T-cell (primary cell): ENCODE measurements at regions of chr12 and their contacts with region 1.

Region 1: DNA sequence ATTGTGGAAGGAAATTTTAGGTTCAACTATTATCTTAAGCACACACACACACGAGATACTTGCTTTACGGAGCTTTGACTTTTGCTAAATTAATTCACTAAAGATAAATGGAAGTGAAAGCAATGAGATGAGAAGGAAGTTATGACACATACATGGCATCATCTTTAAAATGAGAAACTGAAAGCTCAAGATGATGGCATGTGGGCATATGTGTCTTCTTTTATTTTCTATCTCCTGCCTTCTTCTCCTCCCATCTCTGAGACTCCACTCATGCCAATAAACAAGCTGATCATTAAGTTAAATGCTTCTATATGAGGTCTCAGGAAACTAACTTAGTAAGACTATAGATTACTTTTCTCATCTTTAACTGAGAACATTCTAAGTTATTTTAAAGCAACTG is 216.7 kb downstream of the MED13L start:
- DNase-seq: peak in 1 of 35 experiments; percentile 51
- ATAC-seq: peak; percentile 51 to 91 (median 70)
- H3K4me3 ChIP-seq: no peak overlapping the region
- H3K4me3 Mint-ChIP-seq: peak overlapping the region; percentile 52 to 62 (median 59)
- H3K27ac ChIP-seq: no peak overlapping the region
- H3K27ac Mint-ChIP-seq: peak overlapping the region; percentile 4 to 72
- H3K4me1 ChIP-seq: peaks cover 5 to 14% of the 10 kb centered on the region in 2 experiments
- H3K4me1 Mint-ChIP-seq: peaks cover 56 to 68% (median 59%) of the 10 kb centered on the region in 3 donors
- H3K27me3 ChIP-seq: no peaks in the 10 kb centered on the region
- H3K27me3 Mint-ChIP-seq: no peaks in the 10 kb centered on the region

Region 2: DNA sequence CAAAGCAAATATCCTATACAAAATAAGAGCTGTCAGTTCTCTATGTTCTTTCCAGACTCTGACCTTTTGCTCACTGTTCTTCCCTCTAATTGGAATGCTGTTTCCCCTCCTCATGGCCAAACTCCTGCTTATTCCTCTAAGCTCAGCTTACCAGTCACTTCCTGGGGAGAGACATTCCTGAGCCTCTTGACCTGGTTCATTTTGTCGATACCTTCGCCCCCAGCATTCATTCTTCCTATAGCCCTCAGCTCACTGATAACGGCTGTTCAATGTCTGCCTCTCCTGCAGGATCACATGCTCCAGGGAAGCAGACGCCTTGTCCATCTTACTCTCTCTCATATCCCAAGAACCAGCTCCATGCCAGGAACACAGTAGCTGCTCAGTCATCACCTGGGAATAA is 214.2 kb before region 1 on chr12:
- CTCF ChIA-PET with region 1: no interaction called
- POLR2A ChIA-PET with region 1: no interaction called
- DNase-seq: no peak
- ATAC-seq: no peak
- H3K4me3 ChIP-seq: no peak overlapping the region
- H3K4me3 Mint-ChIP-seq: no peak overlapping the region
- H3K27ac ChIP-seq: no peak overlapping the region
- H3K27ac Mint-ChIP-seq: no peak overlapping the region
- H3K4me1 ChIP-seq: no peaks in the 10 kb centered on the region
- H3K4me1 Mint-ChIP-seq: no peaks in the 10 kb centered on the region
- H3K27me3 ChIP-seq: no peaks in the 10 kb centered on the region
- H3K27me3 Mint-ChIP-seq: peaks cover 9 to 14% of the 10 kb centered on the region in 2 donors

Region 3: GRCh38 chr12:116278667-116279066 is 217.9 kb after region 1 on chr12:
- CTCF ChIA-PET with region 1: no interaction called
- POLR2A ChIA-PET with region 1: interaction called in 1 of 2 experiments, 15 read pairs
- DNase-seq: no peak
- ATAC-seq: no peak
- H3K4me3 ChIP-seq: no peak overlapping the region
- H3K4me3 Mint-ChIP-seq: peak overlapping the region; percentile 72 to 88 (median 84)
- H3K27ac ChIP-seq: no peak overlapping the region
- H3K27ac Mint-ChIP-seq: no peak overlapping the region
- H3K4me1 ChIP-seq: peaks cover 14 to 26% of the 10 kb centered on the region in 2 experiments
- H3K4me1 Mint-ChIP-seq: peaks cover 31 to 43% (median 37%) of the 10 kb centered on the region in 3 donors
- H3K27me3 ChIP-seq: no peaks in the 10 kb centered on the region
- H3K27me3 Mint-ChIP-seq: peaks cover 0 to 2% of the 10 kb centered on the region in 2 donors